Panc1 (cell line): ENCODE measurements at regions of chr2 and their contacts with region 1.

Region 1: GRCh38 chr2:27606611-27607010 is 22.2 kb downstream of the CCDC121 start:
- DNase-seq: no peak
- ATAC-seq: no peak
- H3K4me3 ChIP-seq: no peak overlapping the region
- H3K27ac ChIP-seq: no peak overlapping the region
- H3K4me1 ChIP-seq: no peaks in the 10 kb centered on the region
- H3K27me3 ChIP-seq: no peaks in the 10 kb centered on the region
- CTCF ChIP-seq: no peak

Region 2: DNA sequence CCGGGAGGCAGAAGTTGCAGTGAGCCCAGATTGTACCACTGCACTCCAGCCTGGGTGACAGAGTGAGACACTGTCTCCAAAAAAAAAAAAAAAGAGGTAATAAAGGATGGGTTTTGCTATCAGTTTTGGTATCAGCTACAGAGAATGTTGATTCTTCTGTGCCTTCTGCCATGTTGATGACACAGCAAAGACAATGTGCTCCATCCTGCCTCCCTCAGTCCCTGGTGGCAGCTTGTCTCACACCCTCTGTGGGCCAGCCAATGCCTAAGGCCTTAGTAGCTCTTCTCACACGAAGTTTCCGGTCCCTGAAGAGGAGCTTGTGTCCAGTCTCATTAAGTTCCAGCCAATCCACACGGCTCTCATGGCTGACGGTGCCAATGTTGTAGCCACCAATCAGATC is 134.7 kb before region 1 on chr2:
- CTCF ChIA-PET with region 1: no interaction called
- POLR2A ChIA-PET with region 1: interaction called, 10 read pairs
- in situ Hi-C with region 1: no loop called
- intact Hi-C with region 1: no loop called
- DNase-seq: no peak
- ATAC-seq: no peak
- H3K4me3 ChIP-seq: no peak overlapping the region
- H3K27ac ChIP-seq: no peak overlapping the region
- H3K4me1 ChIP-seq: no peaks in the 10 kb centered on the region
- H3K27me3 ChIP-seq: no peaks in the 10 kb centered on the region
- CTCF ChIP-seq: no peak